ENCODE measurements at regions of chr7 and their contacts with region 1.

Region 1: GRCh38 chr7:129218514-129219062 is 6.2 kb upstream of the AHCYL2 start:
- DNase-seq: peak; percentile 79
- CTCF ChIP-seq: peak; percentile 90

Region 2: DNA sequence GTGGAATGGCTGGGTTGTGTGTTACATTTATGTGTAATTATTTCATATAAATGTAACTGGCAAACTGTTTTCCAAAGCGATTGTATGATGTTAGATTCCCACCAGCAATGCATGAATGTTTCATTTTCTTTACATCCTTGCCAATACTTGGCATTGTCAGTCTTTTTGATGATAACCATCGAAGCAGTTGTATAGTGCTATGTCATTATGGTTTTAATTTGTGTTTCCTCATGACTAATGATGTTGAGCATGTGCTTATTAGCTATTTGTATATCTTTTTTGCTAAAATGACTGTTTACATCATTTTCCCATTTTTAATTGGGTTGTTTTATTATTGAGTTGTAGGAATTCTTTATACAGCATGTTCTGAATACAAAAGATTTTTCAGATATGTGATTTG is 28.5 kb after region 1 on chr7:
- CTCF ChIA-PET with region 1: interaction called, 22 read pairs
- POLR2A ChIA-PET with region 1: no interaction called
- DNase-seq: no peak
- CTCF ChIP-seq: no peak

Region 3: DNA sequence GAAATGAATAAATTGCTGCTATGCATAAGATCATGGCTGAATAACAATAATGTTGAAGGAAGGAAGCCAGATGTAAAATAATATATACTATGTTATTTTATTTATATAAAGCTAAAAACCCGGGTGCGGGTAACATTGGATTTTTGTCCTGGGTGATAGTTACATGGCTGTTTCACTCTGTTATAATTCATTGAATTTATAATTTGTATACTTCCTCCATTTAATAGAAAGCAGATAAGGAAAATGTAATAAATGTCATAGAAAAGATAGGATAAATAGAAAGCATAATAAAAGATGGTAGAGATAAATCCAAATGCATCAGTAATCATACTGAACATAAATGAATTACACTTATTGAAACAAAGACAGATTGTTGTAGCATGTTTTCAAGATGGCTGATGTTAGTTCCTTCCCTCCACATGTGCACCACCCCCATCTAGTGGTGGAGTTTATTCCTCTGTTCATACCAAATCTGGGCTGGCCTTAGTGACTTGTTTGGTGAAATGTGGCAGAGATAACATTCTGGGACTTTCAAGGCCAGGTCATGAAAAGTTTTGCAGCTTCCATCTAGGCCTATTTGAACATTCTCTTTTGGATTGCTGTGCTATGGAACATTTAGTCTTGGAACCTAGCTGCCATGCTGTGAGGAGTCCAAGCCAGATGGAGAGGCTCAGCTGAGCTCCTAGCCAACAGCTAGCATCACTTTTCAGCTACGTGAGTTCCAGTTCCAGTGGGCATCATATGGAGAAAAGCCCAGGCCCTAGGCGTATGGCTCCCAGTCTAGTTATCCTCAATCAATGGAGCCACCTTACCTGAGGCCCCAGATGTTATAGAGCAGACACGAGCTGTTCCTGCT is 53.1 kb after region 1 on chr7:
- CTCF ChIA-PET with region 1: interaction called, 114 read pairs
- POLR2A ChIA-PET with region 1: no interaction called
- DNase-seq: peak; percentile 59
- CTCF ChIP-seq: peak; percentile 55

Region 4: GRCh38 chr7:129308047-129308446 is 89.5 kb after region 1 on chr7:
- CTCF ChIA-PET with region 1: interaction called, 23 read pairs
- POLR2A ChIA-PET with region 1: no interaction called
- DNase-seq: no peak
- CTCF ChIP-seq: no peak

Region 5: GRCh38 chr7:129376076-129376777 is 157.6 kb after region 1 on chr7:
- CTCF ChIA-PET with region 1: interaction called, 48 read pairs
- POLR2A ChIA-PET with region 1: no interaction called
- DNase-seq: peak; percentile 45
- CTCF ChIP-seq: peak; percentile 83

Region 6: DNA sequence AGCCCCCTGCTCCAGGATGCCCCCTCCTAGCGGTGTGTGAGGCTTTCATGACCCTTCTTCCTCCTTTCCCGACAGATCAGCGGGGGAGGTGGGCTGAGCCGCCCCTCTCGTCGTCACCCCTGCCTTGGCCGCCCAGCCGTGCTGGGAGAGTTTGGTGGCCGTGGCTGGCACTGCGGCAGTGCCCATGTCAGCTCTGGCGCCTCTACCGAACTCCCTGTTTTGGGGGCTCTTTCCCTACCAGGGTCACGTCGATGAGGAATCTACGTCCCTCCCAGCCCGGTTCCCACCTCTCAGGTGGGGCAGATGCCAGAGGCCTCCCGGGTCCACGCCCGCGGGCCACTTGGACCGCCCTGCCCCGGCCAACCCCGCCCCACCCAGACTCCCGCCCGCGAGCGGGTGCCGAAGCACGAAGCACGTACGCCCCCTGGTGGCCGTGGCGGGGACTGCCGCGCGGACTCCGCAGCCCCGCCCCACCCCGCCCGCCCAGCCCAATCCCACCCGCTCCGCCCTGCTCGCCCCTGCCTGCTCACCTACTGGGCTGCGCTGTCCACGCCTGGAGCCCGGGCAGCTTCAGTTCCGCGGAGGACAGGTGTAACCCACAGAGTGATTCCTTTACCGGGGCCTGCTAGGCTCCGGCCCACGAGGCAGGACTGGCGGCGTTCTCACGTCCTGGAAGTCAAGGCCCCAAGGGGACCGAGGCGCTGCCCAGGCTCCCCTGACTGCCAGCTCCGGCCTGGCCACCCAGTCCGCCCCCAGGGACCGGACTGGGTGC is 607.1 kb after region 1 on chr7:
- CTCF ChIA-PET with region 1: interaction called, 17 read pairs
- POLR2A ChIA-PET with region 1: no interaction called
- DNase-seq: peak; percentile 91
- CTCF ChIP-seq: peak; percentile 66

Region 7: GRCh38 chr7:130063036-130063435 is 844.4 kb after region 1 on chr7:
- CTCF ChIA-PET with region 1: no interaction called
- POLR2A ChIA-PET with region 1: no interaction called
- DNase-seq: no peak
- CTCF ChIP-seq: peak; percentile 79

Measured in GM10248 (cell line).